Sigmoid colon (tissue), 7 donors: ENCODE measurements at regions of chr3 and their contacts with region 1.

Region 1: GRCh38 chr3:39962581-39962980 is 153.2 kb downstream of the MYRIP start:
- DNase-seq: no peak
- H3K4me3 ChIP-seq: no peak overlapping the region
- H3K27ac ChIP-seq: peak overlapping the region in 3 of 4 donors; percentile 47 to 59 (median 53)
- H3K4me1 ChIP-seq: peaks cover 0 to 36% (median 32%) of the 10 kb centered on the region in 4 donors
- H3K27me3 ChIP-seq: no peaks in the 10 kb centered on the region
- CTCF ChIP-seq: no peak
- EP300 ChIP-seq: no peak
- POLR2A ChIP-seq: no peak

Region 2: DNA sequence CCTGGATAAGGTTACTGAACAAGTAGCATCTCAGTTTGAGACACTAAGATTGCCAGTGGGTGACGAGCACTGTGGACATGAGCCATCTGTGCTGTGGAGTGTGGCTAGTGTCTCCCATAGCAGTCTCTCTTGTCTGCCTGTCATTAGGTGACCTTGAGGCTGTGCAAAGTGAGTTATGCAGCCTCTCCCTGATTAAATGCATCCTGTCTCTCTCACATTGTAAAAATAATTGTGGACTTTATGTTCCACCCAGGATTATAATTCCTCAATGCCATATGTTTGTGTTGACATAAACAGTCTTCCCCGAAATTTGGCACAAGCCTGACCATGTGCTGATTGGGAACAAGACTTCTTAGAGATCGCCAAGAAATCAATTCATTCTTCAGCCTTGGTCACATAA is 15.7 kb after region 1 on chr3:
- intact Hi-C with region 1: loop called (anchors 2 kb)
- DNase-seq: no peak
- H3K4me3 ChIP-seq: no peak overlapping the region
- H3K27ac ChIP-seq: no peak overlapping the region
- H3K4me1 ChIP-seq: no peaks in the 10 kb centered on the region
- H3K27me3 ChIP-seq: no peaks in the 10 kb centered on the region
- CTCF ChIP-seq: no peak
- EP300 ChIP-seq: no peak
- POLR2A ChIP-seq: no peak

Region 3: DNA sequence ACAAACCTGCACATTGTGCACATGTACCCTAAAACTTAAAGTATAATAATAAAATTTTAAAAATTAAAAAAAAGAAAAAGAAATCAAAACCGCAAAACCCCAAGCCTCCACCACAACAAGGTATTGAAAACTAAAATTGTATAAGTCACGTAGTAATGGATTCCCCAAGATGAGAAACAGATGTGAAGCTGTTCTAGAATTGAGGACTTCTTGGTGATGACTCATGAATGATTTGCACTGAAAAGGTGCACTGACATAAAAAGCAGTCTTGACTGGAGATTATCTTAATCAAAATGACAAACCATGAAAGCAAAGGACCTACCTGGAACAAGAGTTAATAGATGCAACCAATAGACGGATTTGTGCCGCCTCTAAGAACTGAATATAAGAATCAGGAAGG is 72.6 kb after region 1 on chr3:
- intact Hi-C with region 1: no loop called
- DNase-seq: no peak
- H3K4me3 ChIP-seq: no peak overlapping the region
- H3K27ac ChIP-seq: no peak overlapping the region
- H3K4me1 ChIP-seq: no peaks in the 10 kb centered on the region
- H3K27me3 ChIP-seq: no peaks in the 10 kb centered on the region
- CTCF ChIP-seq: no peak
- EP300 ChIP-seq: no peak
- POLR2A ChIP-seq: no peak